Heart left ventricle (tissue), 16 donors: ENCODE measurements at regions of chr2 and their contacts with region 1.

Region 1: DNA sequence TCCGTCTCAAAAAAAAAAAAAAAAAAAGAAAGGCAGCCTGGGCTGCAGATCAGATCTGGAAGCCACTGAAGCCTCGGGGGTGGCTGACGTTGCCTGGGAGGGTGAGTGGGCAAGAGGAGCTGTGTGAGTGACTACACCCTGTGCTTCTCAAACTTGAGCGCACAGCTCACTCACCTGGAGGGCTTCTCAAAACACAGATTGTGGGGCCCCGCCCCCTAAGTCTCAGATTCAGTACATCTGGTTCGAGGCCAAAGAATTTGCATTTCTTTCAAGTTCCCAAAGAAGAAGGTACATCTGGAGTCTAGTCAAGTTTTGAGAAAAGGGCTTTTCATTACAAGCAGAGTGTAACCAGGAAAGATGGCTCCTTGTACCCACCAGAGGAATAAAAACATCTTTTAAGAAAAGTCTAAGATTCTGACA is 97.7 kb upstream of the CAB39 start:
- DNase-seq: no peak
- ATAC-seq: no peak
- H3K4me3 ChIP-seq: no peak overlapping the region
- H3K27ac ChIP-seq: no peak overlapping the region
- H3K4me1 ChIP-seq: peaks cover 0 to 5% (median 0%) of the 10 kb centered on the region in 12 donors
- H3K27me3 ChIP-seq: no peaks in the 10 kb centered on the region
- CTCF ChIP-seq: no peak
- POLR2A ChIP-seq: no peak

Region 2: GRCh38 chr2:229780856-229781773 is 833.8 kb before region 1 on chr2:
- intact Hi-C with region 1: loop called in 3 of 10 experiments (anchors 5 to 10 kb)
- DNase-seq: no peak
- ATAC-seq: peak in 3 of 4 donors; percentile 72 to 84 (median 79)
- H3K4me3 ChIP-seq: no peak overlapping the region
- H3K27ac ChIP-seq: no peak overlapping the region
- H3K4me1 ChIP-seq: peaks cover 0 to 11% (median 3%) of the 10 kb centered on the region in 12 donors
- H3K27me3 ChIP-seq: no peaks in the 10 kb centered on the region
- CTCF ChIP-seq: peak; percentile 81 to 93 (median 90)
- POLR2A ChIP-seq: no peak

Region 3: GRCh38 chr2:229800997-229801754 is 813.7 kb before region 1 on chr2:
- intact Hi-C with region 1: loop called in 3 of 10 experiments (anchors 2 to 5 kb)
- DNase-seq: peak in 4 of 5 donors; percentile 30 to 58 (median 40)
- ATAC-seq: peak in 3 of 4 donors; percentile 41 to 61 (median 56)
- H3K4me3 ChIP-seq: no peak overlapping the region
- H3K27ac ChIP-seq: peak overlapping the region in 1 of 12 donors; percentile 7
- H3K4me1 ChIP-seq: peaks cover 0 to 31% (median 12%) of the 10 kb centered on the region in 12 donors
- H3K27me3 ChIP-seq: no peaks in the 10 kb centered on the region
- CTCF ChIP-seq: peak; percentile 59 to 83 (median 75)
- POLR2A ChIP-seq: no peak

Region 4: DNA sequence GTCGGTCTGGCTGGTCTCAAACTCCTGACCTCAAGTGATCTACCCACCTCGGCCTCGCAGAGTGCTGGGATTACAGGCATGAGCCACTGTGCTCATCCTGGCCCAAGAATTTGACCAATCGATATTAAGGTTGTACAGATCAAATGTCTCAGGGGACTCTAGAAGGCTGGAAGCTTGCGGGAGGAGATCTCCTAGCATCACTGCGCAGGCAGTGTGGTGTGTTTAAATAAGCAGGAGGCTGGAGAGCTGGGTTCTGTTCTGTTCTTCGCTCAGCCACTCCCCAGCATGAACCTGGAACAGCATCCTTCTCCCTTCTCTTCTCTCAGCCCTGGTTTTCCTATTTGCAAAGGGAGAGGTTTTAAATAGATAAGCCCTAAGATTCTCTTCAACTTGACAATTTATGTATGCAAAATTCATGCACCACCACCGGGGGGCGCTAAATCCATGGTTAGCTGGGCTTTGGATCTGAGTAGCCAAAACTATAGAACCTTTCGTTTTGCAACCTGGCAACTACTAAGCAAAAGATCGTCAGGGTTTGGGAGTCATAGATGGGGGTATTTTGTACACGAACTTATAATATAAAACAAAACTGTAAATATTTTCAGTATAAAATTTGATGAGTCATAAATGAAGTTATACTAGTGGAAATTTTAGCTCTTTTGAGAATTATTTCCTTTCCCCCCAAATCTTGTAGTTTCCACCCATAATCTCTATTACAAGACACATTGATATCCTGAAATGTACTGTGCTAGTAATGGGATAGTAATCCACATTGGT is 606.8 kb before region 1 on chr2:
- intact Hi-C with region 1: loop called (anchors 1 to 5 kb)
- DNase-seq: peak; percentile 56 to 84 (median 69)
- ATAC-seq: peak; percentile 47 to 62 (median 58)
- H3K4me3 ChIP-seq: peak overlapping the region in 7 of 12 donors; percentile 4 to 36 (median 20)
- H3K27ac ChIP-seq: no peak overlapping the region
- H3K4me1 ChIP-seq: peaks cover 0 to 9% (median 2%) of the 10 kb centered on the region in 12 donors
- H3K27me3 ChIP-seq: no peaks in the 10 kb centered on the region
- CTCF ChIP-seq: peak; percentile 77 to 87 (median 83)
- POLR2A ChIP-seq: no peak

Region 5: DNA sequence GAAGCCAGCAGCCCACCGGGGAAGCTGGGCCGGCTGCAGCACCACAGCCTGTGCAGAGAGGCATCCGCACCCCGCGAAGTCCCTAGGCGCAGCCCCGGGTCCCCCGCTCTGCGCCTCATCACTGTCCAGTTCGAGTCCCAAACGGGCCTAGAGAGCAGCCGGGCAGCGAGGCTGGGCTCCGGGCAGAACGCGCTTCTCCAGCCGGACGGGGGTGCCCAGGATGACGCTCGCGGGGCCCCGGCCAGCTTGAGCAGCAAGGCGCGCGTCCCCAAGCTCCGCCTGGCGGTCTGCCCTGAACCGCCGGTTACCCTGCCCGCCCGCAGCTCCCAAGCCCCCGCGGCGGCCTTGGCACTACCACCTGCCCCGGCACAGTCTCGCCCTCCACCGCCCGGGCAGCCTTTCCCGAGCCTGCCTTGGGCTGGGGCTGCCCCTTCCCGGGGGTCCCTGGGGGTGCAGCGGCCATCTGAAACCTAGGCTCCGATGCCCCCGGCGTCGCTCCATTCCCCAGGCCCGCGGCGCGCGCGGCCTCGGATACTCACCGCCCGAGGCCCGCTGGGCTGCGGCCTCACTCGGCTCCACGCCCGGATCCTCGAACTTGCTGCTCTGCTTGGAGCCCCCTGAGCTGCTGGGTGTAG is 546.8 kb before region 1 on chr2:
- intact Hi-C with region 1: loop called in 4 of 10 experiments (anchors 5 to 10 kb)
- DNase-seq: peak; percentile 47 to 80 (median 56)
- ATAC-seq: peak; percentile 13 to 76 (median 62)
- H3K4me3 ChIP-seq: peak overlapping the region; percentile 52 to 76 (median 70)
- H3K27ac ChIP-seq: peak overlapping the region; percentile 0 to 84 (median 62)
- H3K4me1 ChIP-seq: peaks cover 0 to 23% (median 6%) of the 10 kb centered on the region in 12 donors
- H3K27me3 ChIP-seq: peaks cover 0 to 8% (median 0%) of the 10 kb centered on the region in 9 donors
- CTCF ChIP-seq: peak in 6 of 12 donors; percentile 13 to 35 (median 19)
- POLR2A ChIP-seq: no peak

Region 6: GRCh38 chr2:230160112-230160660 is 454.7 kb before region 1 on chr2:
- intact Hi-C with region 1: loop called in 4 of 10 experiments (anchors 5 kb)
- DNase-seq: peak in 3 of 5 donors; percentile 45 to 66 (median 52)
- ATAC-seq: peak; percentile 25 to 76 (median 70)
- H3K4me3 ChIP-seq: no peak overlapping the region
- H3K27ac ChIP-seq: no peak overlapping the region
- H3K4me1 ChIP-seq: peaks cover 0 to 4% (median 0%) of the 10 kb centered on the region in 12 donors
- H3K27me3 ChIP-seq: no peaks in the 10 kb centered on the region
- CTCF ChIP-seq: peak; percentile 61 to 85 (median 81)
- POLR2A ChIP-seq: no peak

Region 7: GRCh38 chr2:230202430-230203109 is 412.4 kb before region 1 on chr2:
- intact Hi-C with region 1: loop called in 1 of 10 experiments (anchors 10 kb)
- DNase-seq: no peak
- ATAC-seq: peak in 1 of 4 donors; percentile 34
- H3K4me3 ChIP-seq: no peak overlapping the region
- H3K27ac ChIP-seq: peak overlapping the region in 4 of 12 donors; percentile 2 to 61 (median 29)
- H3K4me1 ChIP-seq: peaks cover 0 to 18% (median 0%) of the 10 kb centered on the region in 12 donors
- H3K27me3 ChIP-seq: no peaks in the 10 kb centered on the region
- CTCF ChIP-seq: no peak
- POLR2A ChIP-seq: no peak

Region 8: DNA sequence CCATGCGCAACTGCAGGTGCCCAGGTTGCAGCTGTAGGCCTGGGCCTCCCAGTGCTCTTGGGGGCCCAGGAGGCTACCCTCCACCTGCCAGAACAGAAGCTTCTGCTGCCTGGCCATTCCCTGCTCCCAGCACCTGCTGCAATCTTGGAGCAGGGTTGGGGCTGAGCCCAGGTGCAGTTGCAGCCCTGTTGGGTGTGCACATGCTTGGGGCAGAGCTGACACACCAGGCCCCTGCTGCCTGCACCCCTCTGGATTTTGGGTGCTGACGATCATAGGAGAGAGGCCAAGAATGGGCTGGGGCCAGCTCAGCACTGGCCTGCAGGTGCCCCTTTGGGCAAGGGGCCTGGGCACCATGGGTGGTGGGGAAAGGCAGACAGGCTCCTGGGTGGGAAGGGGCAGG is 308.4 kb before region 1 on chr2:
- intact Hi-C with region 1: no loop called
- DNase-seq: no peak
- ATAC-seq: peak in 2 of 4 donors; percentile 13 to 20
- H3K4me3 ChIP-seq: no peak overlapping the region
- H3K27ac ChIP-seq: no peak overlapping the region
- H3K4me1 ChIP-seq: no peaks in the 10 kb centered on the region
- H3K27me3 ChIP-seq: no peaks in the 10 kb centered on the region
- CTCF ChIP-seq: no peak
- POLR2A ChIP-seq: no peak

Region 9: DNA sequence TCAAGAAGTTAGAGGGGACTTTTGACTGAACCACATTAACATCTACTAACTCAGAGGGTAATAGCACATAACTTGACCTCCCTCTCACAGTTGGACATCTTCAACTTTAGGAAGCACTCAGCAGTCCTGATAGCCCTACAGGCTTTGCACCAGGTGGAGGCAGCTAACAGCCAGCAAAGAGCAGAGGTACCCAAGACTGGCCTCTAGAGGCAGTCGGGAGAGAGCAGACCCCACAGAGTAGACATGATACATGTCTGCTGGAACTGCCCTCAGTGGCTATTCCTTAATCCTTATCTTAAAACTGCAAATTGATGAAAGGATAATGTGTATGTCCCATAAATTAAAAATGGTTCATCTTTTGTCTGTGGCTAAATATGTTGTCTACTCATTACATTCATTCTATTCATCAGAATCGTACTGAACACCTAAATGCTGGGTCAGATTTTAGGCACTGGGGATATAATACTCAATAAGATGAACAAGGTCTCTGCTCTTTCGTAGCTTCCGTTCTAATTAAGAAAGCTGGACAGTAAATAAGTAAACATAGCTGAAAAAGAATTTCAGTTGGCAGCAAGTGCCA is 147.5 kb after region 1 on chr2:
- intact Hi-C with region 1: no loop called
- DNase-seq: no peak
- ATAC-seq: peak in 2 of 4 donors; percentile 53 to 65
- H3K4me3 ChIP-seq: no peak overlapping the region
- H3K27ac ChIP-seq: no peak overlapping the region
- H3K4me1 ChIP-seq: peaks cover 0 to 41% (median 23%) of the 10 kb centered on the region in 12 donors
- H3K27me3 ChIP-seq: no peaks in the 10 kb centered on the region
- CTCF ChIP-seq: peak in 7 of 12 donors; percentile 23 to 42 (median 32)
- POLR2A ChIP-seq: no peak